ENCODE measurements at regions of chr9 and their contacts with region 1.

Region 1: GRCh38 chr9:23492126-23493002 is 333.7 kb downstream of the ELAVL2 start:
- DNase-seq: peak in 4 of 7 donors; percentile 13 to 23 (median 20)
- H3K4me3 ChIP-seq: no peak overlapping the region
- H3K27ac ChIP-seq: no peak overlapping the region
- H3K4me1 ChIP-seq: no peaks in the 10 kb centered on the region
- H3K27me3 ChIP-seq: no peaks in the 10 kb centered on the region
- CTCF ChIP-seq: peak; percentile 41 to 62 (median 53)
- POLR2A ChIP-seq: no peak

Region 2: DNA sequence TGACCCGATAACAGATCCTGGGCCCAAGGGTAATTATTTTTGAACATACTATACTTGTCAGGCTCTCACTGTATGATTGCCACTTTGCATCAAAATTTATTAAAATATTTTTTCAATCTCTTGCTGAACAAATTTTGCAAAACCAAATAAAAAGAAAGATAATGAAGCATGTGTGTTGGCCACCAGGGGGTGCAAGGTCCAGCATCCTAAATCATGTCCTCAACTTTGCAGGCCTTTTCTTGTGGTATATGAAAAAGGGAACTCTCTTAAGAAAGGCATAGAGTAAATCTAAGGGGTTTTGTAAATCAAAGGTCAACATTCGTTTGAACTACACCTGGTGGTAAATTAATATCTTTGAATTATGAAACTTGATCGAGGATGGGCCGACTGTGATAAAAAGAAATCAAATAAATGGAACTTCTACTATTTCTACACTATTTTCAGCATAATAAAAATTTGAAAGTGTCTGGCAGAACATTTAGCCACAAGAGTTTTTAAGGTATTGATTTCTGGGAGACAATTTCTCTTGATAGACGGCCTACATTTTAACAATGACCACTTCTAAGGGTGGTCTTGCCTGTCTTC is 369.2 kb before region 1 on chr9:
- intact Hi-C with region 1: loop called in 1 of 2 experiments (anchors 5 kb)
- DNase-seq: peak in 6 of 7 donors; percentile 19 to 71 (median 48)
- H3K4me3 ChIP-seq: no peak overlapping the region
- H3K27ac ChIP-seq: no peak overlapping the region
- H3K4me1 ChIP-seq: no peaks in the 10 kb centered on the region
- H3K27me3 ChIP-seq: no peaks in the 10 kb centered on the region
- CTCF ChIP-seq: peak; percentile 51 to 78 (median 60)
- POLR2A ChIP-seq: no peak

Region 3: GRCh38 chr9:23598994-23599393 is 106.6 kb after region 1 on chr9:
- intact Hi-C with region 1: no loop called
- DNase-seq: no peak
- H3K4me3 ChIP-seq: no peak overlapping the region
- H3K27ac ChIP-seq: no peak overlapping the region
- H3K4me1 ChIP-seq: peaks cover 0 to 3% of the 10 kb centered on the region in 2 donors
- H3K27me3 ChIP-seq: no peaks in the 10 kb centered on the region
- CTCF ChIP-seq: no peak
- POLR2A ChIP-seq: no peak

Region 4: DNA sequence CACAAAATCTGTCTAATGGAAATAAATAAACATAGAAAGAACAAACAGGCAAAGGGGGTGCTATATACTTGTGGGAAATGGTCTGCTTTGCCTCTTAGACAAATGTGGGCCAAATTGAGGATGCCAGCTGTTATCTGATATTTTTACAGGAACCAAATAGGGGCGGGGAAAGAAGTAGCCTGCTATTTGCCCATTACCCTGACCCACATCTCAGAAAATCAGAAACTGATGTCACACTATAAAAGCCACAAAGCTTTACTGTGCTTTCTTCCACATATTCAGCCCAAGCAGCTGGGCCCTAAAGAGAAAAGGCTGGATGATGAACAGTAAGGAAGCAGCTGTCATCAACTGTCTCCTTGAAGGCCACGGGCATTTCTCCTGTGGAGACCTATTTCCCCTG is 236.4 kb after region 1 on chr9:
- intact Hi-C with region 1: no loop called
- DNase-seq: no peak
- H3K4me3 ChIP-seq: no peak overlapping the region
- H3K27ac ChIP-seq: no peak overlapping the region
- H3K4me1 ChIP-seq: no peaks in the 10 kb centered on the region
- H3K27me3 ChIP-seq: no peaks in the 10 kb centered on the region
- CTCF ChIP-seq: no peak
- POLR2A ChIP-seq: no peak